Activated CD4-positive, alpha-beta memory T cell treated with anti-CD3 and anti-CD28 coated beads for 36 hours (primary cell): ENCODE measurements at regions of chr9 and their contacts with region 1.

Region 1: GRCh38 chr9:22175972-22176545 is 167.0 kb upstream of the CDKN2B start:
- DNase-seq: no peak
- H3K4me3 Mint-ChIP-seq: no peak overlapping the region
- H3K27ac Mint-ChIP-seq: no peak overlapping the region
- H3K4me1 Mint-ChIP-seq: peaks cover 7% of the 10 kb centered on the region
- H3K27me3 Mint-ChIP-seq: peaks cover 15% of the 10 kb centered on the region

Region 2: DNA sequence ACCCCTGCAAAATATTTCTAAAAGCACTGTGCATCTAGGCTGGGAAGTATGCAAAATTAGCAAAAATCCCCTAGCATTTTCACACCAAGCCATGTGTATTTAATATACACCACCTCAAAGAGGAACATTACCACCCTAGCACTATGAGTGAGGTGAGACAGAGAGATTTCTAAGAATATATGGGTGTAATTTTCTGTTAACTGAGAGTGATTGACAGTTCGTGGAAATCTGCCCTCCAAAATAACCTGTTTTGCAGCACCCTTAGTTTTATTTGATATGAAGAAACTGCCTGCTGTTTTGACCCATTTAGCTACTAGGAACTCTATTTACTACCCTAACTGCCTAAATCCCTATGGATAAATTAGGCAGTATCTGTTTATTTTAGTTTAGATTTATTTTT is 102.7 kb before region 1 on chr9:
- CTCF ChIA-PET with region 1: no interaction called
- POLR2A ChIA-PET with region 1: no interaction called
- intact Hi-C with region 1: no loop called
- DNase-seq: no peak
- H3K4me3 Mint-ChIP-seq: no peak overlapping the region
- H3K27ac Mint-ChIP-seq: no peak overlapping the region
- H3K4me1 Mint-ChIP-seq: peaks cover 32% of the 10 kb centered on the region
- H3K27me3 Mint-ChIP-seq: peaks cover 19% of the 10 kb centered on the region

Region 3: GRCh38 chr9:22211593-22212360 is 35.7 kb after region 1 on chr9:
- CTCF ChIA-PET with region 1: no interaction called
- POLR2A ChIA-PET with region 1: no interaction called
- intact Hi-C with region 1: loop called (anchors 1 kb)
- DNase-seq: no peak
- H3K4me3 Mint-ChIP-seq: no peak overlapping the region
- H3K27ac Mint-ChIP-seq: no peak overlapping the region
- H3K4me1 Mint-ChIP-seq: peaks cover 32% of the 10 kb centered on the region
- H3K27me3 Mint-ChIP-seq: no peaks in the 10 kb centered on the region